IMR-90 (cell line): ENCODE measurements at regions of chr11 and their contacts with region 1.

Region 1: GRCh38 chr11:116762132-116762531 is 10.7 kb downstream of the BUD13 start:
- DNase-seq: no peak
- ATAC-seq: no peak
- H3K4me3 ChIP-seq: no peak overlapping the region
- H3K27ac ChIP-seq: no peak overlapping the region
- H3K4me1 ChIP-seq: no peaks in the 10 kb centered on the region
- H3K27me3 ChIP-seq: no peaks in the 10 kb centered on the region
- CTCF ChIP-seq: no peak
- POLR2A ChIP-seq: no peak
- RAD21 ChIP-seq: no peak

Region 2: DNA sequence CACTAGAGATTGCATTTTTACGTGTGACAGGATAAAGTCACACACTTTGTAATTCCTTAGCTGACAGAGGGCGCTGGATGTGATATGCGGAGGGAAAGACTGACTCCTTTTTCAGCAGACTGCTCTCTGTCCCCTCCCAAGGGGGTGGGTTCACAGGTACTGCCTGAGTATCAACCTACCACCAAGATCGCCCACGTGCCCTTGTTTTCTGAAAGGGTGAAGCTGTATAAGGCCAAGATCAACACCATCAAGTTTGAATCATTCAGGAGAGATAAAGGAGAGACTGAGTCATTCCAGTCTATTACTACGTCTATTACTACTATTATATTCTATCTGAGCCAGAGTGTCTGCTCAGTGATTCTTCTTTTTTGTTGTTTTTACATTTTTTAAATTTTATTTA is 20.0 kb before region 1 on chr11:
- CTCF ChIA-PET with region 1: interaction called, 10 read pairs
- POLR2A ChIA-PET with region 1: no interaction called
- dilution Hi-C with region 1: no loop called
- in situ Hi-C with region 1: no loop called
- intact Hi-C with region 1: no loop called
- DNase-seq: peak; percentile 62
- ATAC-seq: peak; percentile 42
- H3K4me3 ChIP-seq: no peak overlapping the region
- H3K27ac ChIP-seq: no peak overlapping the region; the same call in 1 of the 2 replicates
- H3K4me1 ChIP-seq: peaks cover 7% of the 10 kb centered on the region
- H3K27me3 ChIP-seq: no peaks in the 10 kb centered on the region
- CTCF ChIP-seq: no peak
- POLR2A ChIP-seq: no peak
- RAD21 ChIP-seq: no peak

Region 3: DNA sequence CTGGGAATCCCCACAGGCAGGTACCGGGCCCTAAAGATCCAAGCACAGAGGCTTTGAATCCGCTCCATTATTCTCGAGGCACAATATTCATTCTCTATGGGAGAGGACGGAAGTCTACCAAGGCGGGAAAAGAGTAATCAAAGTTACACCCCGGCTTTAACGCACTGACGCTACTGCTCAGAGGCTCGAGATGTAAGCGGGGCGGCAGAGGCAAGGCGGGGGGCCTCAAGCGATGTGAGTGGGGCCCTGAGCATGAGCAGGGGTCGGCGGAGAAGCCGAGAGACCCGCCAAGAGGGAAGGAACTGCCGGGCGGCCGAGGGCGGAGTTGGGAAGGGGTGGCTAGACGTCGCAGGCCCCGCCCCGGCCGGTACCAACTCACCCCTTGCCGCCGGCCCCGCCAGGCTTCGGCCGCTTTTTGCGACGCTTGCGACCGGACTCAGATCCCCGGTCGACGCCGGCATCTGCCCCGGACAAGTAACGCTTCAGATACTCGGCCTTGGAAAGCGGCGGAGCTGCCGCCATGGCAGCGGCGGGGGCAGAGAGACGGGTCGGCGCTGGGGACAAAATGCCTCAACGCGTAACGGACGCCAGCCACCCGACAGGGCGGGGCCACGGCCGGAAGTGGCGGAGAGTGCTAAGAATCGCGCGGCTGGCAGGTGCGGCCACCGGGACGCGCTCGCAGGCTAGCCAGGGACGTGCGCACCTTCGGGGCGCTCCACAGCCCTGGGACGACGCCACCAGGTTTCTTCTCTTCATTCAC is 10.5 kb after region 1 on chr11 and contains the start of gene BUD13:
- CTCF ChIA-PET with region 1: no interaction called
- POLR2A ChIA-PET with region 1: no interaction called
- dilution Hi-C with region 1: no loop called
- in situ Hi-C with region 1: no loop called
- intact Hi-C with region 1: loop called (anchors 1 kb)
- DNase-seq: peak; percentile 75
- ATAC-seq: peak; percentile 93
- H3K4me3 ChIP-seq: peak within 1 kb of the TSS; percentile 96
- H3K27ac ChIP-seq: peak within 1 kb of the TSS; percentile 98
- H3K4me1 ChIP-seq: peaks cover 5% of the 10 kb centered on the region
- H3K27me3 ChIP-seq: no peaks in the 10 kb centered on the region
- CTCF ChIP-seq: no peak
- POLR2A ChIP-seq: peak; percentile 64
- RAD21 ChIP-seq: no peak
- total RNA-seq, gene BUD13: 14.0 and 16.4 TPM in 2 replicates